ENCODE measurements at regions of chr6 and their contacts with region 1.

Region 1: GRCh38 chr6:150491131-150491810 is 108.4 kb upstream of the PLEKHG1 start:
- DNase-seq: no peak

Region 2: DNA sequence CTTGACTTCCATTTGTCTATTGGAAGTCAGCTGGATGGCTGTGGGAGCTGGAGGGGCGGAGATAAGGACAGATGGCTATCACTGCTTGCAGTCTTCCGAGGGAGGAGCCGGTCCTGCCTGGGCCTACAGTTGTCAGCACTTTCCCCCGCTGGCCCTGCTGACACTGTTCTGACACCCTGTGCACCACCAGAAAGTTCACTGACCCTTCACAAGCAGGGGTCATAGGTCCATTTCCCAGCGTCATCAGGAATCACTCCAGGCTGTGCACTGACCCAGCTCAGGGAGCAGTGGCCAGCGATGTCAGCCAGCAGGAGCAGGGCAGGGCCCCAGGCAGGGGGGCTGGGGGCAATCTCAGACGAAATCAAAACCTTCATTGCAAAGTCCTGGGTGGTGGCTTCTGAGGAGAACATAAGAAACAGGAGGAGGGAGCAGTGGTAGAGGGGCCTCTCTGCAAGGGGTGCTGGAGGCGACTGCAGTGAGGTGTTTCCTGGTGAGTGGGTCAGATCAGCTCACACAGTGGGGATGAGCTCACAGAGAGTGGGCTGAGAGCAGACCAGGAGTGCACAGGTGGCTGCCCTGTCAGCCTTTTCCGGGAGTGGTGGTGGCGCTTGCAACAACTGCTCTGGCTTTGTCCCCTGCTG is 81.9 kb after region 1 on chr6:
- intact Hi-C with region 1: loop called (anchors 10 kb)
- DNase-seq: no peak

Region 3: DNA sequence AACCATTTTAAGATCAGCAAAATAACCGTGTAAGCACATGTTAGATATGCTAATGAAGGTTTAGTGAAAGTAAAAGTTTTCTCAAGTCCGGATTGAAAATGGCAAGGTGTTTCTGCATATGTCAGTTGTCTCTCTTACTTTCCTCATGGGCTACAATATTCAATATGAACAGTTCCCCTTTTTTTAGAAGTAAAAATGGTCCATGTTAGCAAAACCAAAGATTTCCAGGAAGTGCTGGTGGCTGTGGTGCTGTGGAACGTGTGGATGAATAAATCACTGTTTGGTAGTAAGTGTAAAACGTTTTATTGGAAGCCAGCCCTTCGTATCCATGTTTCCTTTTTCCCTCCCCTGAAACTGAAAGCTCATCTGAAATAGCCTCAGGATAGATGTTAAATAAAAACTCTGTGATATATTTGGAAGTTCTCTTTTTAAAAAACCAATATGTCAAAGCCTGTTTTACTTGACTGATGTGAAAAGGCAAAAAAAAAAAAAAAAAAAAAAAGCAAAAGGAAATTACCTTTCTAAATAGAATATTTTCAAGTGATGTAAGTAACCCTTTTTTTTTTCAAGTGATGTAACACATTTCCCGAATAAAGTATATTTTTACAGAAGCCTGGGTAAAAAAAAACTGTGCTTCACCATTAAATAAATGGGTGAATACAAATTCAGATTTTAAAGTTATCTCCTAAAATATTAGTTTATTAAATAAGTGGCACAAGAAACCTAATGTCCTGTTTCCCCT is 150.3 kb after region 1 on chr6:
- intact Hi-C with region 1: no loop called
- DNase-seq: no peak